AG04450 (cell line): ENCODE measurements at regions of chr11 and their contacts with region 1.

Region 1: DNA sequence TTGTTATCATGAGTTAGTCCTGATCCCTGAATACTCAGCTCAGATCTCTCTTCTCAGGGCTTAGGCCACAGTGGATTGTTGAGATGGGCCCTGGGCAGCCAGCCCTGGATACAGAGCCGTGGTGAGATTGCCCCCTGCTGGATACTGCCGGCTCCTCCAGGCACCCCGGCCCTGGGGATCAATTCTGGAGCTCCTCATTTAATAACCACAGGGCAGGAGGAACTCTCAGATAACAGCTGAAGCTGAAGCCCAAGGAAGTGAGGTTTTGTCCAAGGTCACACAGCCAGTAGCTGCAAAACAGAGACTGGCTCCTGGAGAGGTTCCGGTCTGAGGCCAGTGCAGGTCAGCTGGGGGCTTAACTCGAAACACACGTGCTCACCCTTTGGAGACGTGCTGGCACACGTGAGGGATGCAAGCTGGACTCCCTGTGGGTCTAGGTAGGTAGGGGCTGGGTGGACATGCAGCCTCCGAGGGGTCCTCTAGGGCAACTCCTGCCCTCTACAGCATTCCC is 16.0 kb downstream of the USH1C start:
- DNase-seq: no peak
- H3K4me3 ChIP-seq: no peak overlapping the region
- H3K27ac ChIP-seq: no peak overlapping the region
- H3K27me3 ChIP-seq: peaks cover 11% of the 10 kb centered on the region
- CTCF ChIP-seq: peak; percentile 71

Region 2: DNA sequence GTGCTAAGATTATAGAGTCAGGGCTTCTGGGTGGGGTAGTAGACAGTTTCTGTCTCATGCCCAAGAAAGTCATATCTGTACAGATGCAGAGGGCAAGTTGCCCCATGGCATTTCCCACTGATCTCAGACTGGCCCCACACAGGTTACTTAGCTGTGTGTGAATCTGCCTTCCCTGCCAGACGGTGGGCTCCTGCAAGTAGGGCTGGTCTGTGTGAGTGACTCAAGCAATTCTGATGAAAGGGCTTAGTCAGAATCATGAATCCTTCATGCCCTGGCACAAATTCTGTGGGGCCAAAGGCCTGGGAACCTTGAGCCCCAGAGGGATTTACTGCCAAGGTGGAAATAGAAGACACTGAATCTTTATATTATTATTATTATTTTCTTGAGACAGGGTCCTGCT is 14.4 kb before region 1 on chr11:
- CTCF ChIA-PET with region 1: interaction called, 31 read pairs
- POLR2A ChIA-PET with region 1: no interaction called
- DNase-seq: no peak
- H3K4me3 ChIP-seq: no peak overlapping the region
- H3K27ac ChIP-seq: no peak overlapping the region
- H3K27me3 ChIP-seq: peaks cover 9% of the 10 kb centered on the region
- CTCF ChIP-seq: no peak

Region 3: DNA sequence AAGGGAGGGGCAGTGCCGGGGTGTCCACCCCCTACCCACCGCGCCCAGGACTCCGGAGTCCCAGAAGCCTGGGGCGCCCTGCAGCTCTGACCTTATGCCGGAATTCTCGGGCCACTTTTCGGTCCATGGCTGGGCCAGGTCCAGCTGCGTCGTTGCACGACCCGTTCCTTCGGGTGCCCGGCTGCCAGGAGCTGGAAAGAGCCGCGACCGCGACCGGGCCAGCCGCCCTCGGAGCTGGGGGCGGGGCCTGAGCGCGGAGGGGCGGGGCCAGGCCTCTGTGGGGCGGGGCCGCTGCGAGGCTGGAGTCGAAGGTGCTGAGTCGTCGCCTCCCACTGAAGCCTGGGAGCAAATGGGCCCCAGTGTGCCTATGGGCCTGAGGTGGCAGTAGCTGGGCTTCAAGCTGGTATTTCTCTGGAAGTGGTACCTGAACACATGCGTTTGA is 16.0 kb after region 1 on chr11 and contains the start of gene USH1C:
- CTCF ChIA-PET with region 1: interaction called, 15 read pairs
- POLR2A ChIA-PET with region 1: no interaction called
- DNase-seq: no peak
- H3K4me3 ChIP-seq: no peak within 1 kb of the TSS
- H3K27ac ChIP-seq: no peak within 1 kb of the TSS
- H3K27me3 ChIP-seq: peaks cover 18% of the 10 kb centered on the region
- CTCF ChIP-seq: no peak
- polyA plus RNA-seq, gene USH1C: not detected in 2 replicates